ENCODE measurements at regions of chr17 and their contacts with region 1.

Region 1: DNA sequence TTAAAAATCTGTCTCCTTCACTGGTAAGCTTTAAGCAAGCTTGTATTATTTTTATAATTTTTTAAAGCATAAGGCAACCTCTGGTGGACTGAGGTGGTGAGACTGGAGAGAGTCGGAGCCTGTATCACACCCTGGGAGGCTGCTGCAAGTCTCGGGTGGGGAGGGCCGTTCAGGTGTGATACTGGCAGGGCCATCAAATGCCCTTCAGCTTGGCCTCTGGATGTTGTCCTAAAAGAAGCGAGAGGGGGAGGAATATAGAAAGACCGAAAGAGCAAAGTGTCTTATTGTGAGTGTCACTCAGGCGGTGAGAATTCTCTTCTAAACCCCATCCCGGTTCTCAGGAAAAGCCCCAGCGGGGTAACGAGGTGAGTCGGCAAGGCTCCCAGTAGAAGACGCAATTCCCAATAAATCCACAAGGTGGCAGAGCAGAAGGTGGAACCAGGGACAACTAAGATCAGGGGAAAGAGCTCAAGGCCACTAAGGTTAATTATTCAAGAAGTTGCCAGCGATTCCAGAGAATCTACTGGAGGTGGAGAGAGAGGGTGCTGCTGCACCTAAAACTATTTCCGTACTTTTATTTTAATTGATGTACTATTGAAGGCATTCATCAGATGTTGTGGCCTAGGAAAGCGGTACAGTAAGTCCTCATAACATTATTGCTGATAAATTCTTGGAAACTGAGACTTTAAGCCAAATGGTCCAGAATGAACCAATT is 14.1 kb downstream of the C17orf67 start:
- DNase-seq: peak; percentile 74
- H3K4me3 ChIP-seq: no peak overlapping the region
- H3K27ac ChIP-seq: no peak overlapping the region
- H3K4me1 ChIP-seq: no peaks in the 10 kb centered on the region
- H3K27me3 ChIP-seq: no peaks in the 10 kb centered on the region
- CTCF ChIP-seq: peak; percentile 72 to 77

Region 2: GRCh38 chr17:56939901-56940343 is 120.3 kb after region 1 on chr17:
- CTCF ChIA-PET with region 1: no interaction called
- dilution Hi-C with region 1: no loop called
- in situ Hi-C with region 1: loop called (anchors 5 to 10 kb)
- intact Hi-C with region 1: loop called (anchors 1 kb)
- DNase-seq: peak; percentile 32
- H3K4me3 ChIP-seq: no peak overlapping the region
- H3K27ac ChIP-seq: no peak overlapping the region
- H3K4me1 ChIP-seq: peaks cover 19% of the 10 kb centered on the region
- H3K27me3 ChIP-seq: no peaks in the 10 kb centered on the region
- CTCF ChIP-seq: peak; percentile 60 to 71

Region 3: GRCh38 chr17:56960596-56961538 is 141.3 kb after region 1 on chr17 and contains the start of gene COIL:
- CTCF ChIA-PET with region 1: no interaction called
- dilution Hi-C with region 1: no loop called
- in situ Hi-C with region 1: no loop called
- intact Hi-C with region 1: loop called (anchors 1 kb)
- DNase-seq: peak; percentile 86
- H3K4me3 ChIP-seq: peak within 1 kb of the TSS; percentile 66 to 98 (median 91)
- H3K27ac ChIP-seq: peak within 1 kb of the TSS; percentile 93
- H3K4me1 ChIP-seq: no peaks in the 10 kb centered on the region
- H3K27me3 ChIP-seq: no peaks in the 10 kb centered on the region
- CTCF ChIP-seq: peak; percentile 98 to 99
- total RNA-seq, gene COIL: 11.0 to 14.8 TPM

Region 4: DNA sequence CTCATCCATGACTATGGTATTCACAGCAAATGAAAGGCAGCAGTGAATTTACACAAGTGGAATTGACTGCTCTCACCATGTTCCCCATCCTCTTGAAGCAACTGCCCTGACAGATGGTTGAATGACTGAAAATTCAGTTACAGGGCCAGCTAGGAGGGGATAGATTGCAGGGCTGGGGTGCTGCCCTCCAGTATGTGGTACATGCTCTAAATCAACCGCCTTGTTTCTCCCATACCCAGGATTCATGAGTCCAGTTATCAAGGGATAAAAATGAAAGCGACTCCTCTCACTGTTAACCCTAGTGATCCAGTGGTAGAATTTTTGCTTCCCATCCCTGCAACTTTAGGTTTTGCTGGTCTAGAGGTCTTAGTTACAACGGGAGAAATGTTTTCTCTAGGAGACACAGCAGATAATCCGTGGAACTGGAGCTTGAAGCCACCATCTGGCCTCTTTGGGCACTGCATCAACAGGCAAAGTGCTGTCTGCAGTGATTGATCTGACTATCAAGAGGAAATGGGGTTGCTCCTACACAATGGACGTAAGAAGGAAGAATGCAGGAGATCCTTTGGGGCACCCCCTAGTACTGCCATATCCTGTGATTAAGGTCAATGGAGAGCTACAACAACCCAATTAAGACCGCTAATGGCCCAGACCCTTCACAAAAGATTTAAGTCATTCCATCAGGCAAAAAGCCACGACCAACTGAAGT is 190.3 kb after region 1 on chr17:
- CTCF ChIA-PET with region 1: no interaction called
- dilution Hi-C with region 1: no loop called
- in situ Hi-C with region 1: no loop called
- intact Hi-C with region 1: loop called (anchors 2 kb)
- DNase-seq: peak; percentile 30
- H3K4me3 ChIP-seq: no peak overlapping the region
- H3K27ac ChIP-seq: no peak overlapping the region
- H3K4me1 ChIP-seq: no peaks in the 10 kb centered on the region
- H3K27me3 ChIP-seq: no peaks in the 10 kb centered on the region
- CTCF ChIP-seq: peak; percentile 89 to 91